ENCODE measurements at regions of chr11 and their contacts with region 1.

Region 1: GRCh38 chr11:100316952-100317351 is 370.1 kb upstream of the ARHGAP42 start:
- DNase-seq: no peak
- H3K4me3 ChIP-seq: no peak overlapping the region
- H3K27ac ChIP-seq: no peak overlapping the region
- H3K4me1 ChIP-seq: no peaks in the 10 kb centered on the region
- H3K27me3 ChIP-seq: no peaks in the 10 kb centered on the region
- CTCF ChIP-seq: no peak

Region 2: GRCh38 chr11:100340416-100341323 is 23.7 kb after region 1 on chr11:
- CTCF ChIA-PET with region 1: no interaction called
- POLR2A ChIA-PET with region 1: interaction called, 13 read pairs
- intact Hi-C with region 1: no loop called
- DNase-seq: peak in 1 of 2 experiments; percentile 32
- H3K4me3 ChIP-seq: no peak overlapping the region
- H3K27ac ChIP-seq: no peak overlapping the region
- H3K4me1 ChIP-seq: no peaks in the 10 kb centered on the region
- H3K27me3 ChIP-seq: no peaks in the 10 kb centered on the region
- CTCF ChIP-seq: no peak

Measured in PC-9 (cell line).